Common myeloid progenitor, CD34-positive (primary cell): ENCODE measurements at regions of chr17 and their contacts with region 1.

Region 1: GRCh38 chr17:76523084-76524037 is 14.1 kb downstream of the CYGB start:
- DNase-seq: peak; percentile 62 to 72 (median 69)
- H3K4me3 ChIP-seq: peak overlapping the region in 2 of 7 experiments; percentile 19 to 34
- H3K27ac ChIP-seq: no peak overlapping the region
- H3K4me1 ChIP-seq: peaks cover 0 to 24% (median 22%) of the 10 kb centered on the region in 4 experiments
- H3K27me3 ChIP-seq: no peaks in the 10 kb centered on the region

Region 2: DNA sequence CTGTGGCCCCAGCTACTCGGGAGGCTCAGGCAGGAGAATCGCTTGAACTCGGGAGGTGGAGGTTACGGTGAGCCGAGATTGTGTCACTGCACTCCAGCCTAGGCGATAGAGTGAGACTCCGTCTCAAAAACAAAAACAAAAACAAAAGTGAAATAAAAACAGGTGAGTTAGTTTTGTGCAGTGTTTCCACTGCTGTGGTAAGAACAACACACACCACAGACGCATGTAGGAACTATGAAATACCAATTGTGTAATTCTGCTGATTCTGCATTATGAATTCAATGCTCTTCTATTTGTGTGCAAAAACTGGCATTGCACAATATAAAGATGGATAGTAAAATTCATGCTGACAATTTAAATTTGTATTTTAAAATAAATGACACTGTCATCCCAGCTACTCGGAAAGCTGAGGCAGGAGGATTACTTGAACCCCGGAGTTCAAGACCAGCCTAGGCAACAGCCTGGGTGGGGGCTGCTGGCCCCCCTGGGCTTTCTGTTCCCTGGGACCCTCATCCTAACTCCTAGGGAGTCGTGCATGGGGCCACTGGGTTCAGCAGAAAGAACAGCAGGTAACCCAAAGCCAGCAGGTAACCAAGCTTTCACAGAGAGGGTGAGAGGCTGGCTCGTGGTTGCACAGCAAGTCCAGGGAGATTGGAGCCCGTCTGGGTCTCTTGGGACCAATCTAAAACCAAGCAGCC is 11.5 kb before region 1 on chr17:
- CTCF ChIA-PET with region 1: interaction called, 14 read pairs
- POLR2A ChIA-PET with region 1: no interaction called
- DNase-seq: no peak
- H3K4me3 ChIP-seq: no peak overlapping the region
- H3K27ac ChIP-seq: no peak overlapping the region
- H3K4me1 ChIP-seq: peaks cover 0 to 19% (median 18%) of the 10 kb centered on the region in 4 experiments
- H3K27me3 ChIP-seq: no peaks in the 10 kb centered on the region

Region 3: DNA sequence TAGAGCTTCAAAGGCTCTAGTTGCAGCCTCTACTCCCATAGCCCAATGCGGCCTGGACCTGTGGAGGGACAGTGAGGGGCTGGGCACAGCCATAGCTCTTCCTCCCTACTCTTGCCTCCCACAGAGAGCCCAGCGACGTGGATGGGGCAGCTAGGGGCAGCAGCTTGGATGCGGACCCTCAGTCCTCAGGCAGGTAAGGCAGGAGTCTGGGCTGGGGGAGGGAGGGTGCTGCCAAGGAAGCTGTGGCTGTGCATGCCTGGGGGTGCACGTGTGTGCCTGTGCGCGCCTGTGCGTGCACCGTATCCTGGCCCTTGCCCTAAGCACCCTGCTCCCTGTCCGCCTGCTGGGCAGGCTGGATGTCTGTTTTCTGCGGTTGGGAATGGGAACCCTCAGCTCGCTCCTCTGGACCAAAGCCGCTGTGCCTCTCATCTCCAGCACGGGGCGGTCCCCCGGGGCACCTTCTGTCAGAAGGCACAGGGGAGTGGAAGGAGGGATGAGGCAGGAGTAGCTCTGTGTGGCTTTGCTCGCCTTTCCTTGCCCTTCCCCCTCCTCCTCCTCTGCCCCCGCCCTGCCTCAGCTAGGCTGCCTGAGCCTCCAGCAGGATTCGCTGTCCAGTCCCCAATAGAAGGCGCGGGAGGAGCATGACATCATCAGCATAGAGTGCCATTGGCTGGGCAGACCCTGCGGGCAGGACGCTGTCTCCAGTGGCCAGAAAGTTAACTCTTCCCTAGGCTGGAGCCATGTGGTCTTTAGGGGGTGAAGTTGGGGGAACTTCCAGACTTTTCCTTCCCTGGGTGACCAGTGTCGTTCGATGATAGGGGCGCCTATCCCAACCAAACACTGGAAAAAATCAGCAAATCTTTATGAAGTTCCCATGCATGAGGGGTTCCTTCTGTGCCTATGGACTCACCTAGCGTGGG is 17.3 kb after region 1 on chr17:
- CTCF ChIA-PET with region 1: interaction called, 92 read pairs
- POLR2A ChIA-PET with region 1: interaction called, 4 read pairs
- DNase-seq: peak; percentile 71 to 91 (median 89)
- H3K4me3 ChIP-seq: peak overlapping the region in 5 of 7 experiments; percentile 33 to 73 (median 53)
- H3K27ac ChIP-seq: no peak overlapping the region
- H3K4me1 ChIP-seq: peaks cover 0 to 51% (median 45%) of the 10 kb centered on the region in 4 experiments
- H3K27me3 ChIP-seq: peaks cover 4 to 41% (median 23%) of the 10 kb centered on the region in 5 experiments

Region 4: GRCh38 chr17:76547184-76547641 is 23.9 kb after region 1 on chr17:
- CTCF ChIA-PET with region 1: interaction called, 92 read pairs
- POLR2A ChIA-PET with region 1: interaction called, 13 read pairs
- DNase-seq: peak; percentile 85 to 96 (median 96)
- H3K4me3 ChIP-seq: peak overlapping the region in 1 of 7 experiments; percentile 12
- H3K27ac ChIP-seq: no peak overlapping the region
- H3K4me1 ChIP-seq: peaks cover 17 to 68% (median 66%) of the 10 kb centered on the region in 4 experiments
- H3K27me3 ChIP-seq: no peaks in the 10 kb centered on the region

Region 5: DNA sequence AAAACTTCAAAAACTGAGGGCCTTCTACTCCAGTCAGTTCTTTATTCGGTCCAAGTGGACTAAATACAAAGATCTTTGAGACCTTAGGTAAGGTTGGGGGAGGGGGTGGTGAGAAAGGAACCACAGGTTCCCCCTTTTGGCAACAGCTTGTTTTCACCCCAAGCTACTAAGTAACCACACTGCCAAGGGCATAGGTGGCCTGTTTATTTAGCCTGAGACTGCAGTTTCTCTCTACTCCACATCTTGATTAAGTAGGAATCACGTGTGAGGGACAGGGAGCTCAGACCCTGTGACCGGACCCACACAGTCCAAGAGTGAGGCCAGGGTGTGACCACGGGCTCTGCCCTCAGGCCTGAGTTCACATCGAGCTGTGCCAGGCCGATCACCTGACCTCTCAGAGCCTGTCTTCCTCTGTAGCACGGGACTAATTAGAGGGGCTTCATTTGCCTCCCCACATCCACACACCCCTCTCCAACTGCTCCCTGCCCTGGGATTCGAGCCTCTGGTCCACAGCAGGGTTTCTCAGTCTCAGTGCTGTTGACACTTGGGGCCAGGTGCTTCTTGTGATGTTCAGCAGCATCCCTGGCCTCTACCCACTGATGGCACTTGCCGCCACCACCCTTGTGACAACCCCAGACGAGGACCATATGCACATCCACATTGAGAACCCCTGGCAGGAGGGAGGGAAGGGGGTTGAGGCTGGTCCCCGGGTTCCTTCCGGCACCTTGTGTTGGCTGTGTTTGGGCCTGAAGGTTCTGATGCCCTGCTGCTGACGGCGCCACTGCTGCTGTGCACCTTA is 44.5 kb after region 1 on chr17:
- CTCF ChIA-PET with region 1: interaction called, 15 read pairs
- POLR2A ChIA-PET with region 1: no interaction called
- DNase-seq: peak; percentile 68 to 95 (median 94)
- H3K4me3 ChIP-seq: peak overlapping the region in 4 of 7 experiments; percentile 2 to 34 (median 22)
- H3K27ac ChIP-seq: no peak overlapping the region
- H3K4me1 ChIP-seq: peaks cover 3 to 43% (median 32%) of the 10 kb centered on the region in 4 experiments
- H3K27me3 ChIP-seq: no peaks in the 10 kb centered on the region

Region 6: GRCh38 chr17:76585818-76586593 is 62.6 kb after region 1 on chr17 and contains the start of gene ST6GALNAC2:
- CTCF ChIA-PET with region 1: interaction called, 31 read pairs
- POLR2A ChIA-PET with region 1: interaction called, 3 read pairs
- DNase-seq: peak; percentile 53 to 75 (median 66)
- H3K4me3 ChIP-seq: peak within 1 kb of the TSS; percentile 42 to 78 (median 60)
- H3K27ac ChIP-seq: no peak within 1 kb of the TSS
- H3K4me1 ChIP-seq: peaks cover 0 to 26% (median 19%) of the 10 kb centered on the region in 4 experiments
- H3K27me3 ChIP-seq: peaks cover 13 to 57% (median 27%) of the 10 kb centered on the region in 5 experiments

Region 7: DNA sequence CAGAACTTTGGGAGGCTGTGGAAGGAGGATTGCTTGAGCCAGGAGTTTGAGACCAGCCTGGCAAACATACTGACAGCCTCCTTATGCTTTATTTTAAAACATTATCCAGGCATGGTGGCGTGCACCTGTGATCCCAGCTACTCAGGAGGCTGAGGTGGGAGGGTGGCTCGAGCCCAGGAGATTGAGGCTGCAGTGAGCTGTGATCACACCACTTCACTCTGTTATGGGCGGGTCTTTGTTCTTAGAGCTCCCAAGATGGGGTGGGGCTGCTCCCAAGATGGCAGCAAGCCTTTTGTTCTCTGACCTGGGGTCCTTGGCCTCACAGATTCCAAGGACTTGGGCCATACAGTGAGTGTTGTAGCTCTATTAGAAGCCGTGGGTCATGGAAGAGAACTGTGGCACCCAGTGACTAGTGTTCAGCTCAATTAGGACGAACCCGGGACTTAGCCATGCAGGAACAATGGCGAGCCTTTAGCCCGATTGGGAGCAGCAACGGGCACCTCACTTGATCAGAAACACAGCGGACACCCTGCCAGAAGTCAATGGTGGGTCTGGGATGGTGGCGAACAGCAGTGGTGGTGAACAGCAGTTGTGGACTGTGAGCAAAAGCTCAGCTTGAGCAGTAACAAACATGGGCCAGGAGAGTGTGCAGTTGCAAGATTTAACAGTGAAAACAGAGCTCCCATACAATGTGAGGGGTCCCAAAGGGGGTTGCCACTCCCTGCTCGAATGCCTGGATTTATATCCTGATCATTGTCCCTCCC is 88.6 kb after region 1 on chr17:
- CTCF ChIA-PET with region 1: no interaction called
- POLR2A ChIA-PET with region 1: no interaction called
- DNase-seq: no peak
- H3K4me3 ChIP-seq: no peak overlapping the region
- H3K27ac ChIP-seq: no peak overlapping the region
- H3K4me1 ChIP-seq: peaks cover 0 to 12% (median 4%) of the 10 kb centered on the region in 4 experiments
- H3K27me3 ChIP-seq: no peaks in the 10 kb centered on the region

Region 8: DNA sequence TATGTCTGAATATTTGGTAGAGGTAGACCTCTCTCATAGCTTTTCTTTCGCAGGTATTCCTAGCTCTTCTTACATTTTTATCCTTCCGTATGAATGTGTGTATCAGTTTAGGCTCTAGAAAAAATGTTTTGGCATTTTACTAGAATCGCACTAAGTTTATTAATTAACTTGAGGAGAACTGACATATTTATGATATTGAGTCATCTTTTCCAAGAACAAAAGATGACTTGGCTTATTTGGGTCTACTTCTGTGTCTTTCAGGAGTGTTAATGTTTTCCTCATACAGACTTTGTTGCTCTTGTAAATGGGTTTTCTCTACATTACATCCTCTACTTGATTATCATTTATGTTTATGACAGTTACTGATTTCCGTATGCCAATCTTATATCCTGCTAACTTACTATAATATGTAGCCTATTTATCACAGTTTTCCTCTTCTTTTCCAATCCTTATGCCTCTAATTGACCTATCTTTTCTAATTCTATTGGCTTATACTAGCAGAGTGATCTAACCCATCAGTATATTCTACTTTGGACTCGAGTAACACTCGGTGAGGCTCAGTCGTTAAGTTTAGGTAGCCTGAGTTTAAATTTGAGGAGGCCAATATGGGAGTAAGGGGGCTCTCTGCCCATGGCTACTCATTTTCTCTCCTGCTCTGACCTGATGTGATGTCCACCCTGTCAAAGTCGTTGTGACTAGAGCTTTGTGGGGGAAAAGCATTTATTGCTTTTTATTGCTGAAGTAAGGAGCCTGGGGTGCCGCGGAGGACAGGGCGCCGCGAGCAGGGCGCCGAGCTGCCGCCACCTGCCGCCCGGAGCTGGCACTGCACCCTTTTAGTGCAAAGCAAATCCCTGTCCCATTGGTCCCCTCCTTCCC is 100.1 kb after region 1 on chr17:
- CTCF ChIA-PET with region 1: interaction called, 59 read pairs
- POLR2A ChIA-PET with region 1: no interaction called
- DNase-seq: peak; percentile 63 to 78 (median 77)
- H3K4me3 ChIP-seq: peak overlapping the region in 1 of 7 experiments; percentile 16
- H3K27ac ChIP-seq: no peak overlapping the region
- H3K4me1 ChIP-seq: peaks cover 0 to 6% (median 0%) of the 10 kb centered on the region in 4 experiments
- H3K27me3 ChIP-seq: peaks cover 0 to 2% (median 0%) of the 10 kb centered on the region in 5 experiments